HAP-1 (cell line): ENCODE measurements at regions of chr20 and their contacts with region 1.

Region 1: DNA sequence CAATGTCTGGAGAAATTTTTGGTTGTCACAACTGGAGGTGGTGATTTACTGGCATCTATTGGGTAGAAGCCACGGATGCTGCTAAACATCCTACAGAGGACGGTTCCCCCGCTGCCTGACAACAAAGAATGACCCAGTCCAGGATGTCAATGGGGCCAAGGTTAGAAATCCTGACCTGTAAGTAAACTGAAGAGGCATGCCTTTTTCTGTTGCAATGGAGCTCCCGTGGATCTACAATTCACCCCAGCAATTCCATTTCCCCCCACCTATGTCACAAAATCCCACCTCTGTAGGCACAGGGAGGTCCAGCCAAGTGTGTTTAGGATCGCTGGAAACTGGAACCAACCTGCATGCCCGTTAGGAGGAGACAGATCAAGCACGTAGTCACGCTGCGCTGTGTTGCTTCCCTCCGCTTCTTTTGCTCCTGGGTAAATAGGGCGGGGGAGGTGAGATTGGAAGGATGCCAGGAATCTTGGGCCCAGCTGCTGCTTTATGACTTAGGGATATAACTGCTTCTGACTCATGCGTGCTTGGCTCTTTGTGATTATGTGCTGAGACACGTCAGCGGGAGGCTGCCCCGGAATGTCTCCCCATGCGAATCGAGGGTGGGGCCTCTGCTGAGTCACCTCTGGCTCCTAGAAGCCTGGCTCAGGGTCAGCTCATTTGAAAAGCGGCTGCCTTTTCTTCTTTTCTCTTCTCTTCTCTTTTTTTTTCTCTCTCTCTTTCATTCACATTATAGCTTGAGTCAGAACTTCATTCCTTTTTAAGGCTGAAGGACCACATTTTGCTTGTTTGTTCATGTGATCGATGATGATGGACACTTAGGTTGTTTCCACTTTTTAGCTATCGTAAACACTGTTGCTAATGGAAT is 12.4 kb upstream of the PEDS1 start:
- DNase-seq: peak; percentile 97 to 99
- H3K4me3 ChIP-seq: peak overlapping the region; percentile 24
- H3K4me1 ChIP-seq: peaks cover 12% of the 10 kb centered on the region
- H3K27me3 ChIP-seq: no peaks in the 10 kb centered on the region

Region 2: DNA sequence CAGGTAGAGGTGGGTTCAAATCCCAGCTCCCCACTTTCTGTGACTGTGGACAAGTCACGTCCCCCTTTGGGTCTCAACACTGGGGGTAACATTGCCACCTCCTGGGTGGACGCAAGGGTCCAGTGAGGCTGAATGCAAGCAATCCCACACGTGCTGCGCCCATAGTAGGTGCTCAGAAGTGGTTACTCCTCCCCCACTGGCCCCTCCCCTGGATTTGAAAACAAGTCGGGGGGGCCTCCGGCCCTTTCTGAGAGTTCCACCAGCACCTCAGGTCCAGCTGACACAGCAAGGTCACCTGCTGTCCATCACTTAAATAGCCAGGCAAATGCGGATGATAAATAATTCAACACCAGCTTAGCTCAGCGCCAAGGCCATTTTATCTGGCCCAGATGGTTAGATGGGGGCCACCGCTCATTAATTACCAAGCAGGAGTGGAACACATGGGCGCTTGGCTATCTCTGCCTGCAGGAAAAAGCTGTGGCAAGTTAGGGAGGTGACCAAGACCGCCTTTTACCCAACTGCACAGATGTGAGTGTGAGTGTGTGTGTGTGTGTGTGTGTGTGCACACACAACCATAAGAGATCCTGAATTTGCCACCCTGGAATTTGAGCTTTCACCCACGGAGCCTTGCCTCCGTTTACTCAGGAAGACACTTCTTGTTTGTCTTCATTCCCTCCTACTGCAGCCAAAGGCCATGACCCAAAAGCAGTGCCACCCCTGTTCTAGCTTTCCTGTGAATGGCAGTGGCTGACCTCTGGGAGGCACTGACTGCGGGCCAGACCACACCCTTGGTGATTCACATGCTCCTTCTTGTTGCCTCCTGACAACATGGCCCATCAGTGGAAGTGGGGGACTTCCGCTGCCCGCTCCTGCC is 648.8 kb before region 1 on chr20:
- in situ Hi-C with region 1: no loop called
- DNase-seq: no peak
- H3K4me3 ChIP-seq: no peak overlapping the region
- H3K4me1 ChIP-seq: no peaks in the 10 kb centered on the region
- H3K27me3 ChIP-seq: peaks cover 27% of the 10 kb centered on the region

Region 3: DNA sequence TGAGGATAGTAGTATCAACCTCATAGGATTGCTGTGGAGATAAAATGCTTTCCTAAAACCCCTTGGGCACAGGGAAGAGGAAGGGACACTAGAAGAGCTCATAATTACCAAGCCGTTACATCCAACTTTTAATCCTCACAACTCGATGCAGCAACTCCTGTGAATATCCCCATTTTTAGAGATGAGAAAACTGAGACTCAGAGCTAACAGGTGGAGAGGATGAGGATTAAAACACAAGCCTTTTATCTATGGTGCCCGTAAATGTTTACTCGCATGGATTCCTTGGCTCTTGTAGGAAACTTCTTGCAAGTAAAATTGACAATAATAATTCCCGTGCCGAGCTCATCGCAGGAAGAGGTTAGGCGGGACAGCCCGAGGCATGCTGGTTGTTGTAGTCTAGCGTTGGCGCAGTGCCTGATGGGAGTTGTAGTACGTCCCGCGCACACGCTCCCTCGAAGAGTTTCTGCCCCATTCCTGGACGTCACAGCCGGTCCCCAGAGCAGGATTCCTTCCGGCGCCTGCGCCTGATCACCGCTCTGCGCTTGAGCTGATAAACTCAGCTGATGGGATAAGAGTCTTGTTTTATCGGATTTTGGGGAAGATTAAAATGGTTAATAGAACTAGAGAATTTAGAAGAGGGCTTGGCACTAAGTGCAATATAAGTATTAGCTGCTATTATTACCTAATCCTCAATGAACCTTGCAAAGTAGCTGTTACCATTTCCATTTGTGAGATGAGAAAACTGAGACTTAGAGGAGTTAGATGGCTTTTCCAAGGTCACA is 50.1 kb before region 1 on chr20:
- in situ Hi-C with region 1: loop called (anchors 5 kb)
- DNase-seq: peak; percentile 95 to 98
- H3K4me3 ChIP-seq: peak overlapping the region; percentile 45
- H3K4me1 ChIP-seq: peaks cover 32% of the 10 kb centered on the region
- H3K27me3 ChIP-seq: no peaks in the 10 kb centered on the region